Caco-2 (cell line): ENCODE measurements at regions of chr12 and their contacts with region 1.

Region 1: GRCh38 chr12:62760779-62761178 is 174.2 kb downstream of the PPM1H start:
- DNase-seq: peak in 1 of 2 experiments; percentile 72
- H3K4me3 ChIP-seq: no peak overlapping the region
- H3K4me3 Mint-ChIP-seq: peak overlapping the region; percentile 42
- H3K27ac Mint-ChIP-seq: peak overlapping the region; percentile 73
- H3K4me1 ChIP-seq: peaks cover 57% of the 10 kb centered on the region
- H3K4me1 Mint-ChIP-seq: peaks cover 64% of the 10 kb centered on the region
- H3K27me3 ChIP-seq: no peaks in the 10 kb centered on the region
- H3K27me3 Mint-ChIP-seq: no peaks in the 10 kb centered on the region
- CTCF ChIP-seq: no peak

Region 2: GRCh38 chr12:62603061-62603810 is 157.5 kb before region 1 on chr12:
- CTCF ChIA-PET with region 1: no interaction called
- POLR2A ChIA-PET with region 1: no interaction called
- intact Hi-C with region 1: loop called (anchors 10 kb)
- DNase-seq: peak; percentile 85 to 91
- H3K4me3 ChIP-seq: peak overlapping the region; percentile 93
- H3K4me3 Mint-ChIP-seq: peak overlapping the region; percentile 95
- H3K27ac Mint-ChIP-seq: peak overlapping the region; percentile 100
- H3K4me1 ChIP-seq: peaks cover 23% of the 10 kb centered on the region
- H3K4me1 Mint-ChIP-seq: peaks cover 9% of the 10 kb centered on the region
- H3K27me3 ChIP-seq: no peaks in the 10 kb centered on the region
- H3K27me3 Mint-ChIP-seq: no peaks in the 10 kb centered on the region
- CTCF ChIP-seq: peak in 1 of 2 experiments; percentile 58

Region 3: GRCh38 chr12:62724947-62725447 is 35.8 kb before region 1 on chr12:
- CTCF ChIA-PET with region 1: no interaction called
- POLR2A ChIA-PET with region 1: no interaction called
- intact Hi-C with region 1: loop called (anchors 1 kb)
- DNase-seq: peak; percentile 80 to 81
- H3K4me3 ChIP-seq: no peak overlapping the region
- H3K4me3 Mint-ChIP-seq: peak overlapping the region; percentile 54
- H3K27ac Mint-ChIP-seq: peak overlapping the region; percentile 80
- H3K4me1 ChIP-seq: peaks cover 69% of the 10 kb centered on the region
- H3K4me1 Mint-ChIP-seq: peaks cover 60% of the 10 kb centered on the region
- H3K27me3 ChIP-seq: no peaks in the 10 kb centered on the region
- H3K27me3 Mint-ChIP-seq: no peaks in the 10 kb centered on the region
- CTCF ChIP-seq: no peak

Region 4: DNA sequence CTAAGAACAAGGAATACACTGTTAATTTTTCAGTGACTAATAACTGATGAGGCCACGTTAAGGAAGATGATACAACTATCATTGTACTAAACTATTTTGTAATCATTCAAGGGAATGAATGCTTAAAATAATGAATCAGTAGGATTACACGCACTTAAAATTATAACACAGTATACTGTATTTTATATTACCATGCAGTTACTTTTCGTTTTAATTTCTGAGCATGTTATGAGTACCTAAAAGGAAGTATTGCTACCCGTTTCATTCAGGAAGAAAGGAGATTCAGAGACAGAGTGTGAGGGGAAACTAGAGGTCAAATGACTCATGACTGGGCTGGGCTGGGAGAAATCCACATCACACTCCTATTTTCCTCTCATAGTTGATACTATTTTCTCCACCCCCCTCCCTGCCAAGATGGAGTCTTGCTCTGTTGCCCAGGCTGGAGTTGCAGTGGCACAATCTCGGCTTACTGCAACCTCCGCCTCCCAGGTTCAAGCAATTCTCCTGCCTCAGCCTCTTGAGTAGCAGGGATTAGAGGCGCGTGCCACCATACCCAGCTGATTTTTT is 27.8 kb before region 1 on chr12:
- CTCF ChIA-PET with region 1: no interaction called
- POLR2A ChIA-PET with region 1: no interaction called
- intact Hi-C with region 1: loop called (anchors 1 kb)
- DNase-seq: no peak
- H3K4me3 ChIP-seq: no peak overlapping the region
- H3K4me3 Mint-ChIP-seq: no peak overlapping the region
- H3K27ac Mint-ChIP-seq: peak overlapping the region; percentile 53
- H3K4me1 ChIP-seq: peaks cover 49% of the 10 kb centered on the region
- H3K4me1 Mint-ChIP-seq: peaks cover 48% of the 10 kb centered on the region
- H3K27me3 ChIP-seq: no peaks in the 10 kb centered on the region
- H3K27me3 Mint-ChIP-seq: no peaks in the 10 kb centered on the region
- CTCF ChIP-seq: no peak

Region 5: GRCh38 chr12:62793256-62794217 is 32.8 kb after region 1 on chr12:
- CTCF ChIA-PET with region 1: no interaction called
- POLR2A ChIA-PET with region 1: no interaction called
- intact Hi-C with region 1: loop called (anchors 2 kb)
- DNase-seq: peak; percentile 64 to 82
- H3K4me3 ChIP-seq: no peak overlapping the region
- H3K4me3 Mint-ChIP-seq: no peak overlapping the region
- H3K27ac Mint-ChIP-seq: no peak overlapping the region
- H3K4me1 ChIP-seq: peaks cover 32% of the 10 kb centered on the region
- H3K4me1 Mint-ChIP-seq: peaks cover 9% of the 10 kb centered on the region
- H3K27me3 ChIP-seq: no peaks in the 10 kb centered on the region
- H3K27me3 Mint-ChIP-seq: no peaks in the 10 kb centered on the region
- CTCF ChIP-seq: peak; percentile 80 to 91